GM12878 (cell line): ENCODE measurements at regions of chr10 and their contacts with region 1.

Region 1: DNA sequence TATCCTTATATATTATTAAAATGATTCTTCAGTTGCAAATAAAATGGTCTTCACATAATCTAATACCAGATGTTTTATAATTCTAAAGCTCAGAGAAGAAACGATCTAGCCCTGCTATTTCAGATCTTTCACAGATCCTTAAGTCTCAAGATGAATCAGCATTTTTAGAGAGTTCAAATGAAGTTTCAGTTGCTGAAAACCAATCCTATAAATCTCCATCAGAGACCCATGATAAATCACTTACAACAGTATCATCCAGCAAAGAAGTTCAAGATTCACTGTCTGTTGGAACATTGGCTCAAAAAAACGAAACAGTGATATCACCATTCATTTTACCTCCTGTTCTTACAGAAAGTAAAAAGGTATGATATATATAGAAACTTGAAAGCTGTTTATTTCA is 137.0 kb downstream of the CCDC7 start:
- DNase-seq: no peak
- ATAC-seq: no peak
- H3K4me3 ChIP-seq: no peak overlapping the region
- H3K27ac ChIP-seq: no peak overlapping the region
- H3K4me1 ChIP-seq: no peaks in the 10 kb centered on the region
- H3K27me3 ChIP-seq: no peaks in the 10 kb centered on the region
- CTCF ChIP-seq: no peak
- EP300 ChIP-seq: no peak
- POLR2A ChIP-seq: no peak
- RAD21 ChIP-seq: no peak

Region 2: GRCh38 chr10:32616438-32616837 is 33.5 kb after region 1 on chr10:
- CTCF ChIA-PET with region 1: no interaction called
- POLR2A ChIA-PET with region 1: no interaction called
- RAD21 ChIA-PET with region 1: no interaction called
- SMC1A ChIA-PET with region 1: no interaction called
- in situ Hi-C with region 1: no loop called
- intact Hi-C with region 1: no loop called
- DNase-seq: no peak
- ATAC-seq: no peak
- H3K4me3 ChIP-seq: no peak overlapping the region
- H3K27ac ChIP-seq: no peak overlapping the region
- H3K4me1 ChIP-seq: no peaks in the 10 kb centered on the region
- H3K27me3 ChIP-seq: no peaks in the 10 kb centered on the region
- CTCF ChIP-seq: no peak
- EP300 ChIP-seq: no peak
- POLR2A ChIP-seq: no peak
- RAD21 ChIP-seq: no peak

Region 3: GRCh38 chr10:33621101-33621500 is 1038.2 kb after region 1 on chr10:
- CTCF ChIA-PET with region 1: no interaction called
- POLR2A ChIA-PET with region 1: interaction called, 12 read pairs
- RAD21 ChIA-PET with region 1: no interaction called
- SMC1A ChIA-PET with region 1: no interaction called
- in situ Hi-C with region 1: no loop called
- intact Hi-C with region 1: no loop called
- DNase-seq: no peak
- ATAC-seq: no peak
- H3K4me3 ChIP-seq: no peak overlapping the region
- H3K27ac ChIP-seq: no peak overlapping the region
- H3K4me1 ChIP-seq: no peaks in the 10 kb centered on the region
- H3K27me3 ChIP-seq: no peaks in the 10 kb centered on the region
- CTCF ChIP-seq: no peak
- EP300 ChIP-seq: no peak
- POLR2A ChIP-seq: no peak
- RAD21 ChIP-seq: no peak